AG04449 (cell line): ENCODE measurements at regions of chr2 and their contacts with region 1.

Region 1: DNA sequence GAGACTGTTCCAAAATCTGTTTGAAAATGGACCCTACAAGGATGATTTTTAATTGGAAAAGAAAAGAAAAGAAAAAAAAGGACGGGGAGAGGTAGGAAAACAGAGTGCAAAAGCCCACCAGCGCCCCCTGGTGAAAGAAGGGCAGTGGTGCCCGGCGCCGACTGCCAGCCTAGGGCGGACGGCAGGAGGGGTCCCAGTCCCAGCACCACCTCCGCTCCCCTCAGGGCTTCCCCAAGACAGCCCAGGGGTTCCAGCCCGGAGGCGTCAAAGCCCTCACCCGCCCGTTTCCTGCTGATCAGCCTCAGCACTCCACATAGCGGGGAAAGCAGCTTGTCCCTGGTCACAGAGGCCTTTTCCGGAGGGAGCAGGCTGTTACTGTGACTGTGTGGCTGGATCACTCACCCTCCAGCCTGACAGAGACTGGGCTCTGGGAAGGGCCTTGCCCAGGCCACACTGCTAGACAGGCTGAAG is 213.9 kb downstream of the TFCP2L1 start:
- DNase-seq: no peak
- H3K4me3 ChIP-seq: no peak overlapping the region
- CTCF ChIP-seq: peak; percentile 91

Region 2: GRCh38 chr2:120735746-120736170 is 335.3 kb before region 1 on chr2 and contains the start of gene GLI2:
- CTCF ChIA-PET with region 1: interaction called, 16 read pairs
- POLR2A ChIA-PET with region 1: interaction called, 12 read pairs
- DNase-seq: no peak
- H3K4me3 ChIP-seq: peak within 1 kb of the TSS; percentile 88
- CTCF ChIP-seq: peak; percentile 84

Region 3: GRCh38 chr2:120820263-120820952 is 250.7 kb before region 1 on chr2:
- CTCF ChIA-PET with region 1: interaction called, 10 read pairs
- POLR2A ChIA-PET with region 1: interaction called, 7 read pairs
- DNase-seq: no peak
- H3K4me3 ChIP-seq: peak overlapping the region; percentile 61
- CTCF ChIP-seq: no peak

Region 4: GRCh38 chr2:120856421-120856862 is 214.6 kb before region 1 on chr2:
- CTCF ChIA-PET with region 1: interaction called, 13 read pairs
- POLR2A ChIA-PET with region 1: no interaction called
- DNase-seq: no peak
- H3K4me3 ChIP-seq: no peak overlapping the region
- CTCF ChIP-seq: peak; percentile 49

Region 5: DNA sequence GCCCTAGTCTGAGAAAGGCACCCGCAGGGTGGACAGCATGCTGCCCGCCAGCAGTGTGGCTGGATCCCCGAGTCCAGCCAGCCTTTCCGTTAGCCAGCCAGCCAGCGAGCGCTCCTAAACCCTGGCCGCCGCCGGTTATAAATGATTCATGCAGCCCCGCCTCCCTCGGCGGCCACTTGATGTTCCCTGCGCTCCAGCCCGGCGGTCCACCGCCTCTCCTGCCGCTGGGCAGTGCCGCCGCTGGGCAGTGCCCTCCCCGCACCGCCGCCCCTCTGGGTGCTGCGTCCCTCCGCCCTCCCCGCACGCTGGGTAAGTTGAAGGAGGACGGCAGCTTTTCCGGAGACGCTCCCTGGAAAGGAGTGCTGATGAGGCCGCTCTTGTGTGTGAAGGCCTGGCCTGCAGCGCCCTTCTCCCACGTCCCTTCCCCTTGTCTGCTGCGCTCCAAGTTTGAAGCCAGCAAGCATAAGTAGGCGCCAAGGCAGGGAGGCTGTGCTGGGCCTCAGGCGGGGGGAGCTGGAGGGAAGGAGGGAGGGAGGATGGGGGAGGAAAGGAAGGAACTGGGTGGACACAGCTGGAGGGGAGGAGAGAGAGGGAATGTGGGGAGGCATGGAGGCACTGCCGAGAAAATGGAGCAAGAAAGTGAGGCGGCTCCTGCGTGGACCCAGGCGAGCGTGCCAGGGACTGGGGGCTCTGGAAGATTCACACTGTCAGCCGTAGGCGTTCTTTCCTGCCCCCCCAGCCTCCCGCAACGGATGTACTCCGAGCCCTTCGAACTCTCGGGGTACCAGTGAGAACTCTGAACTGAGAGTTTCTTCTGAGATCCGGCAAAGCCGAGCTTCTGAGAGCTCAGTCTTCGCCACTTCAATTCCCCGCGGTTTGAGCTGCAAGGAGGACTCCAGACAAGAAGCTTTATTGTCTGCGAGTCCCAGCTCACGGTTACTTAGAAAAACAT is 203.5 kb before region 1 on chr2:
- CTCF ChIA-PET with region 1: interaction called, 20 read pairs
- POLR2A ChIA-PET with region 1: interaction called, 3 read pairs
- DNase-seq: no peak
- H3K4me3 ChIP-seq: peak overlapping the region; percentile 56
- CTCF ChIP-seq: no peak

Region 6: GRCh38 chr2:120952318-120952717 is 118.8 kb before region 1 on chr2:
- CTCF ChIA-PET with region 1: interaction called, 14 read pairs
- POLR2A ChIA-PET with region 1: no interaction called
- DNase-seq: no peak
- H3K4me3 ChIP-seq: no peak overlapping the region
- CTCF ChIP-seq: no peak

Region 7: DNA sequence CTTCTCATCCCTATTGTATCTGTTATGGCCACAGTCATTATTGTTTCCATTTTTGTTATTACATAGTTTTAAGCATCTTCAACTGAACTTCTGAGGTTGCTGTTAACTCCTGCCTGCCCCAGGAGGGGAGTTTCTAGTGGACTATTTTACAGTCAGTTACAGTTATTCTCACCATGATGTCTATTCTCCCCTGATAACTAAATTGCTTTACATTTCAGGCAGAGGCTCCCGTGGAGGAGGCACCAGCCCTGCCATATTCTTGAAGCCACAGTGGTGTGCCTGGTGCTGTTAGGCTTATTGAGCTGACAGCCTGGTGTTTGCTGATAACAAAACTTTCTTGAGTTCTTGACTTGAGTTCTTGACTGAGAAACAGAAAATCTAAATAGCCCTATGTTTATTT is 42.5 kb before region 1 on chr2:
- CTCF ChIA-PET with region 1: interaction called, 10 read pairs
- POLR2A ChIA-PET with region 1: no interaction called
- DNase-seq: no peak
- H3K4me3 ChIP-seq: no peak overlapping the region
- CTCF ChIP-seq: no peak